Heart left ventricle (tissue), 16 donors: ENCODE measurements at regions of chr22 and their contacts with region 1.

Region 1: DNA sequence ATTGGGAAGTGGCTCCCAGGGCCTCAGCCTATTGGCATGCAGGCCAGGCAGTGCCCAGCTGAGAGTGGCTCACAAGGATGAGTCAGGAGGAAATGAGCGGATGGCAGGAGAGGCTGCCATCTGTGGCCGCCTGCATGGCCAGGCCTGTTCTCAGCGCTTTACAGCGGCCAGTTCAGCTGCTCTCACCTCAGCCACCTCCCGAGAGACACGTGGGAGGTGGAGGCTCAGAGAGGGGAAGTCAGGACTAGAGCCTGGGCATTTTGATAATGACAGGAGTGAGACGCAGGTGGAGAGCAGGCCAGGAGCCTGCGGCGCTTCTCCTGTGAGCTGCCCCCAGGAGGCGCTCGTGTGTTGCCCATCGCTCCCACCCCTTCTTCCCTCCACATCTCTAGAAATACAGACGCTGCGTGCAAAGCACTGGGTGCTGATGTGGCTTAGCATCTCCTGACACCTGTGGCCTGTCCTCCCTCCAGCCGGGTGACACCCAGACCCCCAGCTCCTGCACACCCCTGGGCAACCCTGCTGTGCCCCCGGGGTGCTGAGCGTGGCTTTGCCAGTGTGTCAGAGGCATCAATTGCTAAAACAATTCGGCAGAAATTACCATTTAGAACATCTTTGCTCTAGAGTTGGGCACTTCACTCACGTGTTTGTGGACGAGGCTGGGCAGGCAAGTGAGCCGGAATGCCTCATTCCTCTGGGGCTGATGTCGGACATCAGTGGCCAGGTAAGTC is 21.4 kb upstream of the PANX2 start:
- DNase-seq: peak in 4 of 5 donors; percentile 32 to 77 (median 54)
- ATAC-seq: peak; percentile 19 to 83 (median 78)
- H3K4me3 ChIP-seq: no peak overlapping the region
- H3K27ac ChIP-seq: no peak overlapping the region
- H3K4me1 ChIP-seq: no peaks in the 10 kb centered on the region
- H3K27me3 ChIP-seq: peaks cover 0 to 12% (median 0%) of the 10 kb centered on the region in 9 donors
- CTCF ChIP-seq: peak; percentile 53 to 88 (median 66)
- POLR2A ChIP-seq: no peak

Region 2: GRCh38 chr22:50136581-50137015 is 12.6 kb before region 1 on chr22:
- intact Hi-C with region 1: no loop called
- DNase-seq: no peak
- ATAC-seq: peak in 1 of 4 donors; percentile 61
- H3K4me3 ChIP-seq: no peak overlapping the region
- H3K27ac ChIP-seq: no peak overlapping the region
- H3K4me1 ChIP-seq: peaks cover 0 to 7% (median 0%) of the 10 kb centered on the region in 12 donors
- H3K27me3 ChIP-seq: peaks cover 0 to 18% (median under 1%) of the 10 kb centered on the region in 9 donors
- CTCF ChIP-seq: no peak
- POLR2A ChIP-seq: no peak

Region 3: DNA sequence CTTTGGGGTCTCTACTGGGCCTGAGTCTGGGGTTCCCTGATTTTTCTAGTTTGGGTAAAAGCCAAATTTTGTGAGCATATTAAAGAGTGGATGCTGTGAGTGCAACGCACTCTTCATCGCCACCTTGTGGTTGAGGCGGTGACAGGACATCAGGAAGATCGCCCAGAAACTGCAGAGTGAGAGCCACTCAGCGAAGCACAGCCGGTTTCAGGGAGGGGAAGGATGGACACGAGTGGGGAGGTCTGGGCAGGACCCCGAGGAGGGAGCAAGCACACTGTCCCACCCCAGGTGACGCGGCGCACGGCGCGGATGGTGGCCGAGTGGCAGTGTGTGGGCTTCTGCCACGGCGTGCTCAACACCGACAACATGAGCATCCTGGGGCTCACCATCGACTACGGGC is 60.7 kb after region 1 on chr22:
- intact Hi-C with region 1: loop called (anchors 1 to 5 kb)
- DNase-seq: peak in 3 of 5 donors; percentile 69 to 80 (median 78)
- ATAC-seq: peak in 3 of 4 donors; percentile 23 to 35 (median 29)
- H3K4me3 ChIP-seq: no peak overlapping the region
- H3K27ac ChIP-seq: no peak overlapping the region
- H3K4me1 ChIP-seq: peaks cover 0 to 33% (median 20%) of the 10 kb centered on the region in 12 donors
- H3K27me3 ChIP-seq: no peaks in the 10 kb centered on the region
- CTCF ChIP-seq: peak; percentile 74 to 87 (median 80)
- POLR2A ChIP-seq: no peak